PC-9 (cell line): ENCODE measurements at regions of chr2 and their contacts with region 1.

Region 1: DNA sequence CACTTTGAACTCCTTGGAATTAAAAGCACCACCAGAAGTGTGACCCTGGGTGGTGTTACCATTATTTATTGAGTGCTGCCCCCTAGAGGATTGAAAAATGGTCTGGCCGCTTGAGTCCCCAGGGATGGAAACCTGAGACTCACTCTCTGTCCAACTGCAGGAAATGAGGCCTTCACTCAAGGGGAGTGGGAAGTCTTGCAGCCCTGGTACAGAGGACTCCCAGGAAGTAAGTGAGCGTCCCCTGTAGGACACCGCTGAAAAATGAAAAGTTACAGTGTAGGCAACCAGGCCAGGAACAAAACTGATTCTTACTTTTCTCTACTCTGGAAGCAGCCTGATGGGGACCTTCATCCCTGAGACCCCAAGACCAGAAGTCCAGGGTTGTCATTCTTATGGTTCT is 2.2 kb upstream of the NRP2 start:
- DNase-seq: peak; percentile 52 to 56
- H3K4me3 ChIP-seq: no peak overlapping the region
- H3K27ac ChIP-seq: no peak overlapping the region
- H3K4me1 ChIP-seq: no peaks in the 10 kb centered on the region; the same call in none of the 2 replicates
- H3K27me3 ChIP-seq: no peaks in the 10 kb centered on the region
- CTCF ChIP-seq: peak; percentile 74

Region 2: DNA sequence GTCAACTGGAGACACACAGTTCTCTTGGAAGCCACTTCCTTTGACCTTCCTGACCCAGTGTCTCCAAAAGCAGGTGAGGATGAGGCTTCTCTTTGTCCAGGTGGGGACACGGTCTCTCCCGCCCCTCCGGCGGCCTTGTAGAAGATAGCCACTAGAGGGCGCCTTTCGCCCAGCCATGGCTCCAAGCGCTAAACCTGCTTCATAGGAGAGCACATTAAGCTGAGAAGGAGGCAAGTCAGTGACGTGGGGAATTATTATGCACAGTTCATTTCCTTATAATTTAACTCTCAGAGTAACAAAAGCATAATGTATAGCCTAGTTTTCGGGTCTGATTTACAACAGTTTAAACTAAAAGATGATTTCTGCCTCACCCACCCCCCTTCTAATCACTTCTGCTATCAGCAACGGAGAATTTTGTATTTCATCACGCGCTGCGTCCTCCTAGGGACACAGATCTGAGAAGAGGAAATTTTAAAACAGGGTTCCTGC is 1534.8 kb before region 1 on chr2:
- CTCF ChIA-PET with region 1: no interaction called
- POLR2A ChIA-PET with region 1: no interaction called
- intact Hi-C with region 1: loop called (anchors 1 kb)
- DNase-seq: peak; percentile 40 to 62
- H3K4me3 ChIP-seq: no peak overlapping the region
- H3K27ac ChIP-seq: no peak overlapping the region
- H3K4me1 ChIP-seq: no peaks in the 10 kb centered on the region
- H3K27me3 ChIP-seq: peaks cover 35% of the 10 kb centered on the region
- CTCF ChIP-seq: peak; percentile 84

Region 3: GRCh38 chr2:204325468-204325867 is 1354.6 kb before region 1 on chr2:
- CTCF ChIA-PET with region 1: no interaction called
- POLR2A ChIA-PET with region 1: no interaction called
- intact Hi-C with region 1: loop called (anchors 2 kb)
- DNase-seq: peak; percentile 48 to 62
- H3K4me3 ChIP-seq: no peak overlapping the region
- H3K27ac ChIP-seq: no peak overlapping the region
- H3K4me1 ChIP-seq: peaks cover 6% of the 10 kb centered on the region
- H3K27me3 ChIP-seq: no peaks in the 10 kb centered on the region
- CTCF ChIP-seq: peak; percentile 81

Region 4: DNA sequence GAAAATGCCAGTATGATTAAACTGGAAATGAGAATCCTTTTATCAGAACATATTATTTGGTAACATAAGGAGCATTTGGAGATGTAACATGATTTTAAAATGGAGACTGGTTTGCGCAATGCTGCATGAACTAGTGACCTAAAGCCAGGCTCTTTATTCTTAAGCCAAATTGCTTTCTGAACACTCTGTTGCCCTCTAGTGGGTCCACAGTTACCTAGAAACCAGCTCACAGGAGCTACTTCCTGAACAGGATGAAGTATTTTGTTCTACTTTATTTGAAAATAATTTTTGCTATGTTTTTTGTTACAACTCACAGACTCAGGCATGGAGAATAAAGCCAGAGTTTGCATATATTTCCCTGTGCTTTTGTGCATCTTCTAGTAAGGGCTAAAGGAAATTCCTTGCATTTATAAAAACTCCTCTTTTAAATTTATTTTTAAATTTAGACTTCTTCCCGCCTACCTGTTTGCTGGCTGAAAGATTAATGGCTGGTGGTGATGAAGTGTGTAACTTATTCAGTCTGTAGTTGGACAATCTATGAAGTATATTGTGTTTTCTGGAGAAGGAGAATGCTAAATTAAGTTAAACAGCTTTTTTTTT is 988.1 kb before region 1 on chr2:
- CTCF ChIA-PET with region 1: no interaction called
- POLR2A ChIA-PET with region 1: no interaction called
- intact Hi-C with region 1: loop called (anchors 2 kb)
- DNase-seq: peak; percentile 10 to 58
- H3K4me3 ChIP-seq: no peak overlapping the region
- H3K27ac ChIP-seq: no peak overlapping the region
- H3K4me1 ChIP-seq: no peaks in the 10 kb centered on the region
- H3K27me3 ChIP-seq: no peaks in the 10 kb centered on the region
- CTCF ChIP-seq: peak; percentile 70

Region 5: GRCh38 chr2:205731583-205732071 is 51.6 kb after region 1 on chr2:
- CTCF ChIA-PET with region 1: no interaction called
- POLR2A ChIA-PET with region 1: no interaction called
- intact Hi-C with region 1: no loop called
- DNase-seq: no peak
- H3K4me3 ChIP-seq: no peak overlapping the region
- H3K27ac ChIP-seq: no peak overlapping the region
- H3K4me1 ChIP-seq: peaks cover 14% of the 10 kb centered on the region
- H3K27me3 ChIP-seq: no peaks in the 10 kb centered on the region
- CTCF ChIP-seq: no peak

Region 6: DNA sequence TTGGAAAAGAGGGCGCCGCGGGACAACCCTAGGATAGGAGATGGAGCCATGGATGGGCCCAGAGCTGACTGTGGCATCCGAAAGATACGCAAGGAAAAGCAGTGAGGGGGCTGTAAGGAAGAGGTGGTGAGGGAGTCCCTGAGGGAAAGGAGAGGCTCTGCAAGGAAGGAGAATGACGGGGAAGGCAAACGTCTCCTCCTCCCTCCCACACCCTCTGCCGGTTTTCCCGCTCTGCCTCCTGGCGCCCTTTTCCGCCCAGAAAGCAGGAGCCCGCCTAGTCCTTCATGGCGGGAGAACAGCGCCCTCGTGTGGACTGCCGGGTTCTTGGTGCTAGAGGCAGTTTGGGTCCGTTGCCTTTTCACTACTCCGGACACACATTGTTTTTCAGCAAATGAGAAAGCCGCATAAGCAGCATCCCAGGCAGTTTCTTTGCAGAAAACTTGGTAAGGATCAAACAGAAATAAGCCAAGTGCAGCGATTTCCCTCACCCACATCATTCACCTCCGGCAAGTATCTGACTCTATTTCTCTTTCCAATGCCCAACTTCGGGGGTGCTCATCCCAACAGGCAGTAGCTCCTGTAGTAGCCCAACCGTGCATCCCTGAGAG is 205.5 kb after region 1 on chr2:
- CTCF ChIA-PET with region 1: no interaction called
- POLR2A ChIA-PET with region 1: no interaction called
- intact Hi-C with region 1: loop called (anchors 2 kb)
- DNase-seq: peak; percentile 48 to 52
- H3K4me3 ChIP-seq: no peak overlapping the region
- H3K27ac ChIP-seq: no peak overlapping the region
- H3K4me1 ChIP-seq: no peaks in the 10 kb centered on the region
- H3K27me3 ChIP-seq: no peaks in the 10 kb centered on the region
- CTCF ChIP-seq: peak; percentile 84

Region 7: DNA sequence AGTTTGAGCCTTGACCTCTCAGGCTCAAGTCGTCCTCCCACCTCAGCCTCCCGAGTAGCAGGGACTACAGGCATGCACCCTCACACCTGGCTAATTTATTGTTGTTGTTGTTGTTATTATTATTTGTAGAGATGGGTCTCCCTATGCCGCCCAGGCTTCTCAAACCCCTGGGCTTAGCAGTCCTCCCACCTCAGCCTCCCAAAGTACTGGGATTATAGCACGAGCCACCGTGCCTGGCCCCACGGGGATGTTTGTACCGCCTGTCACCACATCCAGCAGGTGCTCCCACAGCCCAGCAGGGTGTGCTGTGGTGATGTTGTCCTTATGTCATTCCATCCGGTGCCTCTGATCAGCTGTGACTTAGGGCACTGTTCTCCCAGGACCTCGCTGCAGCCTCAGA is 223.6 kb after region 1 on chr2:
- CTCF ChIA-PET with region 1: no interaction called
- POLR2A ChIA-PET with region 1: no interaction called
- intact Hi-C with region 1: no loop called
- DNase-seq: no peak
- H3K4me3 ChIP-seq: no peak overlapping the region
- H3K27ac ChIP-seq: no peak overlapping the region
- H3K4me1 ChIP-seq: no peaks in the 10 kb centered on the region
- H3K27me3 ChIP-seq: peaks cover 3% of the 10 kb centered on the region; the same call in 1 of the 2 replicates
- CTCF ChIP-seq: 0 out of 2 replicates have a peak, but pooled peaks have one; percentile 22

Region 8: DNA sequence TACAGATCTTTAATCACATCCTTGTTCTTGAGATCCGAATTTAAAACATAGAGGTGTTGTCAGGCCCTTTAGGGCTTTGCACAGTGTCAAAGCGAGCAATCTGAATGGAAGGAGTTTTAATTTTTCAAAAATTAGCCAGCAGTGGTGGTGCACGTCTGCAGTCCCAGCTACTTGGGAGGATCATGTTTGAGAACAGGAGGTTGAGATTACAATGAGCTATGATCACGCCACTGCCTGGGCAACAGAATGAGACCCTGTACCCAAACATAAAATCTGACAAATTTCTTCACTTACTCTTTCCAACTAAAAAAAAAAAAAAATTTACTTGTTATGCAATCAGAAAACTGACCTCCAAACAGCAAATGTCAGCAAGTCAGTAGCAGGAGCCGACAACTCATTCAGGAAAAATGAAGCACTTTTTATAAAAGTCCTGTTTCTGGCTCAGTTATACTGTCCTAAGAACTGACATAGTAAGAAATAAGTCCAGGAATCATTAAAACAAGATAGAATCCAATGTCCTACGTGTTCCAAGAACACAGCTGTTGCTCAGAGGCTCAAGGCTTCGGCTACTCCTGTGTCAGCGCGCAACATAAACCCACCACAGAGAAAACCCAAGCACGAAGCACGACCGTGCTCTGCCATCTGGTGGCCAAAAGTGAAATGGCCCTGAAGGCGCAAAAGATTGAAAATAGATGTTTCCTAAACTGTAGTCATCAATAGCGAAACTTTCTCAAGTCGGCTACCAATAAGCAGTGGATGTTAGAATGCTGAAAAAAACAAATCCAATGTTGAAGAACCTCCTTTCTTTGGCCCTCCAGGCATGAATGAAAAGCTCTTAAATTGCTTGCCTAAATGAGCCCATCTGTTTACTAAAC is 267.8 kb after region 1 on chr2:
- CTCF ChIA-PET with region 1: interaction called, 3 read pairs
- POLR2A ChIA-PET with region 1: no interaction called
- intact Hi-C with region 1: loop called (anchors 5 kb)
- DNase-seq: peak in 1 of 2 experiments; percentile 41
- H3K4me3 ChIP-seq: peak overlapping the region; percentile 14; the same call in 1 of the 2 replicates
- H3K27ac ChIP-seq: no peak overlapping the region
- H3K4me1 ChIP-seq: no peaks in the 10 kb centered on the region
- H3K27me3 ChIP-seq: no peaks in the 10 kb centered on the region
- CTCF ChIP-seq: peak; percentile 87